Posterior cingulate gyrus (tissue), 11 donors: ENCODE measurements at regions of chr4 and their contacts with region 1.

Region 1: GRCh38 chr4:58411904-58412303 is 1301.7 kb upstream of the IGFBP7 start:
- DNase-seq: no peak

Region 2: DNA sequence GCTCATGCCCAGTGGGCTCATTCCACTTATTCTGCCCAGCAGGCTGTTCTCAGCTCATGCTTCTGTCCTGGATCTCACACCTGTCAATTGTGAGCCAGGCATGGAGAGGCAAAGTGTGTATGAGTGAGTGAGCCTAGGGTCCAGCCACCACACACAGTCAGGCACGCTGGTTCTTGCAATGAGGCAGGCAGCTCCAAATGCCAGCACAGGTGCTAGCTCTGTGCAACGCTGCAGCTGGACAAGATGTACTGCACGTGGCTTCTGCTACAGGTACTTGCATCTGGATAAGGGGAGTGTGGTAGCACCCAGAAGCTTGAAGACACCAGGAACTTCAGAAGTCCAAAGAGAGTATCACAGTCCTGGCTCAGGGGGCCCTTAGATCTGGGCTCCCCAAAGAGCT is 52.3 kb before region 1 on chr4:
- intact Hi-C with region 1: loop called (anchors 10 kb)
- DNase-seq: peak in 2 of 10 donors; percentile 21 to 58